Mammary epithelial cell (primary cell): ENCODE measurements at regions of chr11 and their contacts with region 1.

Region 1: GRCh38 chr11:32792948-32793475 is 1.4 kb downstream of the CCDC73 start:
- DNase-seq: peak; percentile 28
- H3K4me3 ChIP-seq: peak overlapping the region in 1 of 3 experiments; percentile 3
- H3K27ac ChIP-seq: no peak overlapping the region
- H3K4me1 ChIP-seq: no peaks in the 10 kb centered on the region
- H3K27me3 ChIP-seq: no peaks in the 10 kb centered on the region
- CTCF ChIP-seq: peak; percentile 65 to 72

Region 2: GRCh38 chr11:32326522-32326921 is 466.5 kb before region 1 on chr11:
- CTCF ChIA-PET with region 1: no interaction called
- dilution Hi-C with region 1: no loop called
- in situ Hi-C with region 1: loop called (anchors 10 kb)
- intact Hi-C with region 1: loop called (anchors 1 kb)
- DNase-seq: no peak
- H3K4me3 ChIP-seq: no peak overlapping the region
- H3K27ac ChIP-seq: no peak overlapping the region
- H3K4me1 ChIP-seq: no peaks in the 10 kb centered on the region
- H3K27me3 ChIP-seq: no peaks in the 10 kb centered on the region
- CTCF ChIP-seq: no peak

Region 3: DNA sequence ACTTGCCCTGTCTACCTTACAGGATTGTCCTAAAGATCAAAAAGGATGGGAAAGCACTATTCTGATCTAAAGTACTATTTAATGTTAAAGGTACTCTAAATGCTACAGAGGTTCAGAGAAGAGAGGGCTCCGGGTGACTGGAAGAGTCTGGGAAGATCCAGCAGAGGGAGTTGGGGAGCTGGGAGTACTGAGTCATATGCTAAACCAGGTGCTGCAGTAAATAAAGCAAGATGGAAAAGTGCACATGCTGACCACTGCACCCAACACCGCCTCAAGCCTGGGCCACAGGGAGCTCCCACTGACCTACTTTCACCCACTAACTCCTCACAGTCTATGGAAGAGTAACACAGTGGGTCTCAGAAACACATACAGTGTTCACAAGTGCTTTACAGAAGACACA is 407.0 kb before region 1 on chr11:
- CTCF ChIA-PET with region 1: no interaction called
- dilution Hi-C with region 1: no loop called
- in situ Hi-C with region 1: no loop called
- intact Hi-C with region 1: loop called (anchors 1 kb)
- DNase-seq: peak; percentile 47
- H3K4me3 ChIP-seq: no peak overlapping the region
- H3K27ac ChIP-seq: no peak overlapping the region
- H3K4me1 ChIP-seq: no peaks in the 10 kb centered on the region
- H3K27me3 ChIP-seq: no peaks in the 10 kb centered on the region
- CTCF ChIP-seq: peak; percentile 60 to 72

Region 4: DNA sequence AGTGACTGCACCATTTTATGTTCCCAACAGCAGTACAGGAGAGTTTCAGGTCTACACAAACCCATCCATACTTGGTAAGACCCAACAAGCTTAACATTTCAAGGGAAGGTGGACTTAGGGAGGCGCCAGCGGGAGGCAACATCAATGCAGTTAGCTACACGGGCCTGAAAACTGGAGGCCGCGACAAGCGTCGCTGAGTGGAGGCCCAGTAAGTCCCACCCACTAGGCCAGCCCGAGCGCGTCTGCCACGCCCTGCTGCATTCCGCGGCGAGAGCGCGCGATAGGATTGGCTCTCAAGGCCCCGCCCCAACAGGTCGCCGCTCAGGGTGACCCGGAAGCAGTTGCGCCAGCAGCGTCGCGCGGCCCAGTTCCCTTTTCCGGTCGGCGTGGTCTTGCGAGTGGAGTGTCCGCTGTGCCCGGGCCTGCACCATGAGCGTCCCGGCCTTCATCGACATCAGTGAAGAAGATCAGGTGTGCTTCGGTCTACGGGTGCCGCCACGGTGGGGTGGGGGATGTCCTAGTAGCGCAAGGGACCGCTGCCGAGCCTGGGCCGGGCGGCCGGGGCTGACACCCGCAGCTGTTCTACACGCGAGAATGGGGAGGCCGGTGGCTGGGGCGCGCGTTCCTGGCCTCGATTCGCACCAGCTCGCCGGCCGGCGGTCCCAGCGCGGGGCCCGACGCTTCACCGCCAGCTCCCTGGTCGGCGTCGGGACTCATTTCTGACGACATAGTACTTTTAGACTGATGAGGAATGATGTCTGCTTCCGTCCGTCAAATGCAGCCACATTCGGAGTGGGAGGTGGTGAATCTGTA is 209.3 kb before region 1 on chr11 and contains the start of gene EIF3M:
- CTCF ChIA-PET with region 1: no interaction called
- dilution Hi-C with region 1: no loop called
- in situ Hi-C with region 1: no loop called
- intact Hi-C with region 1: loop called (anchors 5 kb)
- DNase-seq: peak; percentile 94
- H3K4me3 ChIP-seq: peak within 1 kb of the TSS; percentile 92 to 99 (median 93)
- H3K27ac ChIP-seq: peak within 1 kb of the TSS; percentile 86
- H3K4me1 ChIP-seq: peaks cover 18% of the 10 kb centered on the region
- H3K27me3 ChIP-seq: no peaks in the 10 kb centered on the region
- CTCF ChIP-seq: no peak
- total RNA-seq, gene EIF3M: 305 to 469 TPM

Region 5: GRCh38 chr11:32606220-32606619 is 186.8 kb before region 1 on chr11:
- CTCF ChIA-PET with region 1: no interaction called
- dilution Hi-C with region 1: no loop called
- in situ Hi-C with region 1: no loop called
- intact Hi-C with region 1: loop called (anchors 5 kb)
- DNase-seq: no peak
- H3K4me3 ChIP-seq: no peak overlapping the region
- H3K27ac ChIP-seq: no peak overlapping the region
- H3K4me1 ChIP-seq: no peaks in the 10 kb centered on the region
- H3K27me3 ChIP-seq: no peaks in the 10 kb centered on the region
- CTCF ChIP-seq: no peak

Region 6: DNA sequence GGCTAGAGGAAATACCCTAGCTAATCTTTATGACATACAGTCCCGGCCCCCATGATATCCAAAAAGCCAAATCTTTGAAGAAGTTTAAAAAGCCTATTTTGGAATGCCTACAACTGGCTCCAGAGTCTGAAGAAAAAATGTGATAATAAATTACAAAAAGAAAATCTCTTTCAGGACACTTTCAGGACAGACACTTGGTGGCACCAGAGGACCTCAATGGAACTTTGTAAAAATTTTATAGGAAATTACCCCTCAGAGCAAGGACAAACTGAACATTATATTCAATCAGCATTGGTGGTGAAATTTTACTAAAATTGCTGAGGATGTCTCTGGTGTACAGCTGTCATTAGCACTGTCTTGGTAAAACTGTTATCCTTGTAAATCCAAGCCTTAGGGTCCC is 79.5 kb before region 1 on chr11:
- CTCF ChIA-PET with region 1: no interaction called
- dilution Hi-C with region 1: no loop called
- in situ Hi-C with region 1: no loop called
- intact Hi-C with region 1: loop called (anchors 1 kb)
- DNase-seq: no peak
- H3K4me3 ChIP-seq: no peak overlapping the region
- H3K27ac ChIP-seq: no peak overlapping the region
- H3K4me1 ChIP-seq: no peaks in the 10 kb centered on the region
- H3K27me3 ChIP-seq: peaks cover 3% of the 10 kb centered on the region
- CTCF ChIP-seq: peak; percentile 31 to 49

Region 7: DNA sequence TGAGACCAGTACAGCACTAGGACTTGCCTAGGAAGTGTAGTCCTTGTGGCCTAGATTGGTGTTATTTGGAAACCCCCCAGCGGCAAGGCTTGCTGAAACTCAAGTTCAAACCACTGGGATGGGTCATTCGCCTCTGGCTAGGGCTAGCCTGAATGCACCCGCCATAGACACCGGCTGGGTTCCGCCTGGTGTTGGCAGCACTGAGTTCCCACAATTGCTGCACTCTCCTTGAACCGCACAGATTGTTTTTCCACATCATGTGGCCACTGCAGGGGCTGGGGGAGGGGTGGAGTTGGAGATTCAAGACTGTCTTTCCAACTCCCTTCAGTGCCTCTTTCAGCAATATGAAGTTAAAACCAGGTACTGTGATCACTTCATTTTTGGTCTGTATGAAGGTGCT is 41.6 kb before region 1 on chr11:
- CTCF ChIA-PET with region 1: no interaction called
- dilution Hi-C with region 1: no loop called
- in situ Hi-C with region 1: no loop called
- intact Hi-C with region 1: loop called (anchors 1 kb)
- DNase-seq: no peak
- H3K4me3 ChIP-seq: no peak overlapping the region
- H3K27ac ChIP-seq: no peak overlapping the region
- H3K4me1 ChIP-seq: no peaks in the 10 kb centered on the region
- H3K27me3 ChIP-seq: peaks cover 4% of the 10 kb centered on the region
- CTCF ChIP-seq: no peak